ENCODE measurements at regions of chr3 and their contacts with region 1.

Region 1: DNA sequence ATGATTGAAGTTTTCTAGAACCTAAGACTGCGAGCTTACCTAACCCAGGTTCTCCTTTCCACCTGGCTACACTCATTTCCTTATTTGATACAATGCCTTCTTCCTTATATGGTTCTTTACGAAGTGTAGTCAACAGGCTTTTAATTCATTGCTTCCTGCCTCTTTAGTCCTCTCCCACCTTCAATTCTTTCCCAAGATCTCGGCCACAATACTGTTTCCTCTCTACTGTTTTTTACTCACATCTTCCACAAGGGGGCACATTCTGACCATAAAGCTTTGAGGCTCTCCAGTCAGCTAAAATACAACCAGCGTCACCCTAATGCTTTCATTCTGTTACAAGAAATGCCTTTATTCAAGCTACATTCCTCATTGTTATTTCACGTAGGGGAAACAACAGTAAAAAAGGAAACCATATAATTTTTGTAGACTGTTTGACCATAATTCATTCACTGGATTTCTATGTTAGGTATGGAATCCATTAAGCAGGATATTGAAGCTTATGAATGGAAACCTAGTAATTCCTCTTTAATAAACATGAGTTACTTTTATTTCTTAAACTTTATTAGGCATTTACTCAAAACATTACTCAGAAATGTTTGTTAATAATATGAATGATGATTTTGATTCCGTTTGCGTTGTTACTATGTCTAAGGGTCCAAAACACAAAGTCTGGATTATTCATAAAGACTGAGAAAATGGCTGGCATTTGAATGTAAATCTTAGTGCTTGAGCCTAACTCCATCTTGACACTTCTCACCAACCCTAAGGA is 29.5 kb upstream of the VEPH1 start:
- DNase-seq: peak in 1 of 35 experiments; percentile 30
- ATAC-seq: no peak
- H3K4me3 ChIP-seq: no peak overlapping the region
- H3K4me3 Mint-ChIP-seq: no peak overlapping the region
- H3K27ac ChIP-seq: no peak overlapping the region
- H3K27ac Mint-ChIP-seq: no peak overlapping the region
- H3K4me1 ChIP-seq: no peaks in the 10 kb centered on the region
- H3K4me1 Mint-ChIP-seq: no peaks in the 10 kb centered on the region
- H3K27me3 ChIP-seq: no peaks in the 10 kb centered on the region
- H3K27me3 Mint-ChIP-seq: peaks cover 0 to under 1% of the 10 kb centered on the region in 2 donors

Region 2: DNA sequence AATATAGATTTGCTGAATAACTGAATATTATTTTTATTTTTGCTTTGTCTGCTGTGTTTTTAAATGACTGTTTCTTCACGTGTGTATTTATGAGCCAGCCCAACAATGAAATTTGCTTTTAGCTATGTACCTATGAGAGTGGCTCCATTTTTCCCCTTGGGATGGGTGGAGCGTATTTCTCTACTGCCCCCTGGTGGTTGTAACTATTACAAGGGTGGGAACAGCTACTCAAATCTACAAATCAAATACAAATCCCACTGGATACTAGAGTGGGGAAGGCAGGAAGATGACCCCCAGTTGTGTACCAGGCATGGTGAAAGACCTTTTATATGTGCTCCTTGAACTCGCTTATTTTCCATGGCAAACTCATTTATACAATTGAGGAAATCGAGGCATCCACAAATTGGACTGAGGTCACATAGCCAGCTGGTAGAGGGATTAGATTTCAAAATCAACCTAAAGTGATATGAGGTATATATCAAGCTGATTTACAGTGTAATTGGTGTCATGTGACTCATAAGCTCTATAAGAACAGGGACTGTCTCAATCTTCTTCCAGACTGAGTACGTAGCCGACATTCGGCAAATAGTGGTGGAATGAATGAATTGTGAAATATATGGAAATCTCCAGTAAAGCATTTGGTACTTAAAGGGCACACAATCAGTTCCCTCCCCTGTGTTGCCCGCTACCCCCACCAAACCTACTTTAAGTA is 40.0 kb after region 1 on chr3:
- CTCF ChIA-PET with region 1: interaction called, 4 to 13 read pairs
- POLR2A ChIA-PET with region 1: no interaction called
- DNase-seq: peak in 1 of 35 experiments; percentile 42
- ATAC-seq: no peak
- H3K4me3 ChIP-seq: no peak overlapping the region
- H3K4me3 Mint-ChIP-seq: no peak overlapping the region
- H3K27ac ChIP-seq: no peak overlapping the region
- H3K27ac Mint-ChIP-seq: no peak overlapping the region
- H3K4me1 ChIP-seq: no peaks in the 10 kb centered on the region
- H3K4me1 Mint-ChIP-seq: no peaks in the 10 kb centered on the region
- H3K27me3 ChIP-seq: peaks cover 0 to 4% of the 10 kb centered on the region in 2 experiments
- H3K27me3 Mint-ChIP-seq: peaks cover 6 to 11% of the 10 kb centered on the region in 2 donors

Measured in T-cell (primary cell).